ENCODE measurements at regions of chr2 and their contacts with region 1.

Region 1: GRCh38 chr2:197705121-197705911 is at the start of gene MARS2:
- DNase-seq: peak; percentile 96
- total RNA-seq, gene MARS2: 6.7 TPM

Region 2: DNA sequence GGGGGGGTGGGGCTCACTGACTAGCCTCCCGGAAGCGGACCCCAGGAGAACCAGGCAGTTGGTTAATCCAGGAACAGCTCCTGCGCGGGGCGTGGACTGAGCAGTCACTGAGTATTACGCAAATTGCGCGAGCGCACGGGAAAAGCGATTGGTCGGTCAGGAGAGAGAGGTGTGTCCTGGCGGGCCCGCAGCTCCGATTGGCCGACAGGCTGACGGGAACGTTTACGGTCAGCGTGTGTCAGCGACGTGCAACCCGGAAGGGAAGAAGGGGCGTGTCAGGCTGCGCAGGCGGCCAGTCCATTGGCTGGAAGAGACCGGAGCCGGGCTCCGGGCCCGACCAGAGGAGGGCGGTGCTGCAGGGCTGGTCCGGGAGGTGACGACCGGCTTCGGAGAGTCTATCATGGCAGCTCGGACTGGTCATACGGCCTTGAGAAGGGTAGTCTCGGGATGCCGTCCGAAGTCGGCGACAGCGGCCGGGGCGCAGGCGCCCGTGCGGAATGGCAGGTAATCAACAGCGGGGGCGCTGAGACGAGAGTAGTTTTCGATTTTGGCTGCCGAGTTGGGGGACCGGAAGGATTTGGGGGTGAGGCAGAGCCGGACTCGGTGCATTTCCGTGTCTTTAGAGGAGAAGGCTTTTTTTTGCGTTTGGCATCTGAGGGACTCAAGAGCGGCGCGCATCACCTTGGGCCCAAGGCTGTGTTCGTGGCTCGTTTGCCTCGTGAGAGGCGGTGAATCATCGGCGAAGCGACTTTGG is 252.0 kb before region 1 on chr2 and contains the start of gene COQ10B:
- intact Hi-C with region 1: loop called (anchors 5 kb)
- DNase-seq: peak; percentile 100
- total RNA-seq, gene COQ10B: 38.5 TPM

Region 3: GRCh38 chr2:197515739-197516392 is 189.4 kb before region 1 on chr2 and contains the start of gene MOB4:
- intact Hi-C with region 1: loop called (anchors 1 kb)
- DNase-seq: peak; percentile 98
- total RNA-seq, gene MOB4: 27.3 TPM

Region 4: DNA sequence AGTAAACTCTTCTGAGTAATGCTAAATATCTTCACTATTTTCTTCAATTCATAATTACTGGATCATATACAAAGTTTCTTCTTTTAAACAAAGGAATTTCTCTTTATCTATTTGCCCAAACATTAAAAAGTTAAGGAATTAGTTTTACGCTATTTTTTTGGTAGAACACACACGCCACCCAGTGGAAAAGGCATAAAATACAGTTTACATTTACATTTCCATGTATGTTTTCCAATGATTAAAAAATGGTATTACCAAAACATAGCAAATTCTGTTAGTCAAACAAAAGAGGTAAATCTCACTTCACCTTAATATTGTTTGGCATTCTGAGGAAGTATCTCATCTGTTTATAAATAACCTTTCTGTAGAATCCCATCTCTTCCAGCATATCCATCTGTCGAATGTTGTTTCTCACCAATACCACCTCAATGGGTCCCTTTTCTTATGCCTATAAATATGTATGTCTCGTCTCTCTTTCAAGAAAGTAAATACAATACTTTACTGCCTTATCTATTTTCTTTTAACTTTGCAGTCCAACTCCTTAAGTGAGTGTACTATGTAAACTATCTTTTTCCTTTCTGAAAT is 72.6 kb after region 1 on chr2:
- intact Hi-C with region 1: loop called (anchors 5 kb)
- DNase-seq: no peak

Measured in cardiac septum (tissue), 1 donor.